CD4-positive, alpha-beta T cell (primary cell): ENCODE measurements at regions of chr6 and their contacts with region 1.

Region 1: GRCh38 chr6:25278914-25279747 is at the start of gene CARMIL1:
- DNase-seq: peak; percentile 44 to 87 (median 63)
- ATAC-seq: peak; percentile 70
- H3K4me3 ChIP-seq: peak within 1 kb of the TSS; percentile 64
- H3K4me3 Mint-ChIP-seq: peak within 1 kb of the TSS; percentile 93
- H3K27ac ChIP-seq: peak within 1 kb of the TSS; percentile 1 to 53
- H3K27ac Mint-ChIP-seq: peak within 1 kb of the TSS; percentile 79
- H3K4me1 ChIP-seq: peaks cover 16% of the 10 kb centered on the region
- H3K4me1 Mint-ChIP-seq: peaks cover 47% of the 10 kb centered on the region
- H3K27me3 ChIP-seq: no peaks in the 10 kb centered on the region
- H3K27me3 Mint-ChIP-seq: peaks cover 1% of the 10 kb centered on the region
- CTCF ChIP-seq: peak; percentile 75
- total RNA-seq, gene CARMIL1: 3.9 to 4.7 TPM

Region 2: GRCh38 chr6:24630856-24631505 is 648.1 kb before region 1 on chr6:
- CTCF ChIA-PET with region 1: no interaction called
- POLR2A ChIA-PET with region 1: no interaction called
- intact Hi-C with region 1: no loop called
- DNase-seq: no peak
- ATAC-seq: no peak
- H3K4me3 ChIP-seq: no peak overlapping the region
- H3K4me3 Mint-ChIP-seq: no peak overlapping the region
- H3K27ac ChIP-seq: no peak overlapping the region
- H3K27ac Mint-ChIP-seq: no peak overlapping the region
- H3K4me1 ChIP-seq: no peaks in the 10 kb centered on the region
- H3K4me1 Mint-ChIP-seq: no peaks in the 10 kb centered on the region
- H3K27me3 ChIP-seq: no peaks in the 10 kb centered on the region
- H3K27me3 Mint-ChIP-seq: peaks cover 23% of the 10 kb centered on the region
- CTCF ChIP-seq: no peak

Region 3: GRCh38 chr6:24702720-24703282 is 576.3 kb before region 1 on chr6:
- CTCF ChIA-PET with region 1: no interaction called
- POLR2A ChIA-PET with region 1: no interaction called
- intact Hi-C with region 1: no loop called
- DNase-seq: no peak
- ATAC-seq: no peak
- H3K4me3 ChIP-seq: no peak overlapping the region
- H3K4me3 Mint-ChIP-seq: no peak overlapping the region
- H3K27ac ChIP-seq: no peak overlapping the region
- H3K27ac Mint-ChIP-seq: peak overlapping the region; percentile 66
- H3K4me1 ChIP-seq: no peaks in the 10 kb centered on the region
- H3K4me1 Mint-ChIP-seq: peaks cover 39% of the 10 kb centered on the region
- H3K27me3 ChIP-seq: no peaks in the 10 kb centered on the region
- H3K27me3 Mint-ChIP-seq: no peaks in the 10 kb centered on the region
- CTCF ChIP-seq: no peak

Region 4: GRCh38 chr6:25027221-25027916 is 251.8 kb before region 1 on chr6:
- CTCF ChIA-PET with region 1: no interaction called
- POLR2A ChIA-PET with region 1: no interaction called
- intact Hi-C with region 1: no loop called
- DNase-seq: peak; percentile 64 to 93 (median 76)
- ATAC-seq: peak; percentile 93
- H3K4me3 ChIP-seq: peak overlapping the region; percentile 47
- H3K4me3 Mint-ChIP-seq: peak overlapping the region; percentile 70
- H3K27ac ChIP-seq: peak overlapping the region; percentile 60 to 62
- H3K27ac Mint-ChIP-seq: peak overlapping the region; percentile 91
- H3K4me1 ChIP-seq: peaks cover 37% of the 10 kb centered on the region
- H3K4me1 Mint-ChIP-seq: peaks cover 59% of the 10 kb centered on the region
- H3K27me3 ChIP-seq: no peaks in the 10 kb centered on the region
- H3K27me3 Mint-ChIP-seq: no peaks in the 10 kb centered on the region
- CTCF ChIP-seq: peak; percentile 41

Region 5: GRCh38 chr6:25369433-25370181 is 90.5 kb after region 1 on chr6:
- CTCF ChIA-PET with region 1: no interaction called
- POLR2A ChIA-PET with region 1: interaction called, 20 read pairs
- intact Hi-C with region 1: loop called (anchors 5 kb)
- DNase-seq: peak in 6 of 14 experiments; percentile 3 to 53 (median 26)
- ATAC-seq: peak; percentile 28
- H3K4me3 ChIP-seq: peak overlapping the region; percentile 34
- H3K4me3 Mint-ChIP-seq: peak overlapping the region; percentile 76
- H3K27ac ChIP-seq: peak overlapping the region; percentile 42 to 62
- H3K27ac Mint-ChIP-seq: peak overlapping the region; percentile 97
- H3K4me1 ChIP-seq: peaks cover 35% of the 10 kb centered on the region
- H3K4me1 Mint-ChIP-seq: peaks cover 70% of the 10 kb centered on the region
- H3K27me3 ChIP-seq: no peaks in the 10 kb centered on the region
- H3K27me3 Mint-ChIP-seq: no peaks in the 10 kb centered on the region
- CTCF ChIP-seq: no peak

Region 6: GRCh38 chr6:25447570-25447929 is 168.4 kb after region 1 on chr6:
- CTCF ChIA-PET with region 1: no interaction called
- POLR2A ChIA-PET with region 1: no interaction called
- intact Hi-C with region 1: no loop called
- DNase-seq: peak in 3 of 14 experiments; percentile 20 to 53 (median 43)
- ATAC-seq: no peak
- H3K4me3 ChIP-seq: no peak overlapping the region
- H3K4me3 Mint-ChIP-seq: no peak overlapping the region
- H3K27ac ChIP-seq: no peak overlapping the region
- H3K27ac Mint-ChIP-seq: no peak overlapping the region
- H3K4me1 ChIP-seq: peaks cover 2% of the 10 kb centered on the region
- H3K4me1 Mint-ChIP-seq: peaks cover 25% of the 10 kb centered on the region
- H3K27me3 ChIP-seq: no peaks in the 10 kb centered on the region
- H3K27me3 Mint-ChIP-seq: no peaks in the 10 kb centered on the region
- CTCF ChIP-seq: no peak

Region 7: GRCh38 chr6:25472306-25472705 is 193.2 kb after region 1 on chr6:
- CTCF ChIA-PET with region 1: no interaction called
- POLR2A ChIA-PET with region 1: no interaction called
- intact Hi-C with region 1: loop called in 1 of 2 experiments (anchors 5 kb)
- DNase-seq: no peak
- ATAC-seq: peak; percentile 41
- H3K4me3 ChIP-seq: no peak overlapping the region
- H3K4me3 Mint-ChIP-seq: no peak overlapping the region
- H3K27ac ChIP-seq: no peak overlapping the region
- H3K27ac Mint-ChIP-seq: no peak overlapping the region
- H3K4me1 ChIP-seq: no peaks in the 10 kb centered on the region
- H3K4me1 Mint-ChIP-seq: no peaks in the 10 kb centered on the region
- H3K27me3 ChIP-seq: no peaks in the 10 kb centered on the region
- H3K27me3 Mint-ChIP-seq: no peaks in the 10 kb centered on the region
- CTCF ChIP-seq: peak; percentile 25

Region 8: GRCh38 chr6:25556516-25556915 is 277.4 kb after region 1 on chr6:
- CTCF ChIA-PET with region 1: interaction called, 11 read pairs
- POLR2A ChIA-PET with region 1: no interaction called
- intact Hi-C with region 1: no loop called
- DNase-seq: peak; percentile 60 to 85 (median 74)
- ATAC-seq: no peak
- H3K4me3 ChIP-seq: no peak overlapping the region
- H3K4me3 Mint-ChIP-seq: no peak overlapping the region
- H3K27ac ChIP-seq: no peak overlapping the region
- H3K27ac Mint-ChIP-seq: no peak overlapping the region
- H3K4me1 ChIP-seq: no peaks in the 10 kb centered on the region
- H3K4me1 Mint-ChIP-seq: no peaks in the 10 kb centered on the region
- H3K27me3 ChIP-seq: no peaks in the 10 kb centered on the region
- H3K27me3 Mint-ChIP-seq: no peaks in the 10 kb centered on the region
- CTCF ChIP-seq: peak; percentile 87